GM23248 (cell line): ENCODE measurements at regions of chrX and their contacts with region 1.

Region 1: GRCh38 chrX:15349046-15349445 is 13.7 kb upstream of the PIGA start:
- DNase-seq: peak; percentile 70
- H3K4me3 ChIP-seq: no peak overlapping the region
- H3K27ac ChIP-seq: no peak overlapping the region
- H3K4me1 ChIP-seq: no peaks in the 10 kb centered on the region
- H3K27me3 ChIP-seq: no peaks in the 10 kb centered on the region

Region 2: GRCh38 chrX:15416133-15416993 is 67.3 kb after region 1 on chrX:
- in situ Hi-C with region 1: no loop called
- DNase-seq: peak; percentile 11
- H3K4me3 ChIP-seq: no peak overlapping the region
- H3K27ac ChIP-seq: no peak overlapping the region
- H3K4me1 ChIP-seq: peaks cover 8% of the 10 kb centered on the region; the same call in 1 of the 2 replicates
- H3K27me3 ChIP-seq: no peaks in the 10 kb centered on the region

Region 3: GRCh38 chrX:15468036-15468435 is 119.0 kb after region 1 on chrX:
- in situ Hi-C with region 1: loop called (anchors 10 kb)
- DNase-seq: peak; percentile 78
- H3K4me3 ChIP-seq: no peak overlapping the region
- H3K27ac ChIP-seq: no peak overlapping the region
- H3K4me1 ChIP-seq: peaks cover 12% of the 10 kb centered on the region
- H3K27me3 ChIP-seq: no peaks in the 10 kb centered on the region

Region 4: DNA sequence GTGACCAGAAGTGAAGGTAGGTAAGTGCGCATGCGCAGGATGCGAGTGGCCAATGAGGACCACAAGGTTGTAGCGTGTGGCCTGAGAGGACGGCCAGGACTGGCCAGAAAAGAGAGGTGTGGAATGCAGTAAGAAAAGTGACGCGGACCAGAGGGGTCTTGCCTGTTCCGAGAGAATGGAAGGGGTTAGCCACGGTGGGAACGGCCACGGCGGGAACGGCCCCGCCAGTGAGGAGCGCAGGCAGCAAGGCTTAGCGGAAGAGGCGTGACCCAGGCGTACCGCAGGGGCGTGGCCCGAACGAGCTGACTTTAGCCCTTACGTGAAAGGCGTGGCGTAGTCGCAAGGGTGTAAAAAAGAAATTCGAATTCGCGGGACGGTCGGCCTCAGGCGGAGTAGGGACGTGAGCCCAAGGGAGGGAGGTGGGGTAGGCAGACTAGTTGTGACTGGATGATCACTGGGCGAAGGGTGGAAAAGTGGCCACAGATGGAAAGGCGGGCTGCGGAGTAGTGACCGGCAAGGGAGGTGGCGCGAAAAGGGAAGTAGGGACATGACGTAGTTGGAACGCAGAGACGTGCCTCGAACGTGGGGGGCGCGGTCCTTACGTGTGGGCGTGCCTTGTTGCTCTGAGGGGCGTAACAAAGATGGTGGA is 325.9 kb after region 1 on chrX:
- in situ Hi-C with region 1: loop called (anchors 10 kb)
- DNase-seq: peak; percentile 94
- H3K4me3 ChIP-seq: peak overlapping the region; percentile 87
- H3K27ac ChIP-seq: peak overlapping the region; percentile 97
- H3K4me1 ChIP-seq: 0 out of 2 replicates have a peak, but pooled peaks cover 3% of the 10 kb centered on the region
- H3K27me3 ChIP-seq: no peaks in the 10 kb centered on the region

Region 5: GRCh38 chrX:15854021-15854655 is 505.1 kb after region 1 on chrX:
- in situ Hi-C with region 1: no loop called
- DNase-seq: peak; percentile 44
- H3K4me3 ChIP-seq: peak overlapping the region; percentile 85
- H3K27ac ChIP-seq: no peak overlapping the region
- H3K4me1 ChIP-seq: no peaks in the 10 kb centered on the region
- H3K27me3 ChIP-seq: no peaks in the 10 kb centered on the region